Left lung (tissue), 14 donors: ENCODE measurements at regions of chr19 and their contacts with region 1.

Region 1: GRCh38 chr19:18058208-18059030 is 28.3 kb downstream of the IL12RB1 start:
- DNase-seq: peak; percentile 82 to 96 (median 86)
- ATAC-seq: peak; percentile 97
- H3K4me3 ChIP-seq: peak overlapping the region in 1 of 2 donors; percentile 34
- H3K27ac ChIP-seq: peak overlapping the region; percentile 75 to 79
- H3K4me1 ChIP-seq: peaks cover 11 to 20% of the 10 kb centered on the region in 2 donors
- H3K27me3 ChIP-seq: no peaks in the 10 kb centered on the region
- CTCF ChIP-seq: peak; percentile 89 to 94

Region 2: DNA sequence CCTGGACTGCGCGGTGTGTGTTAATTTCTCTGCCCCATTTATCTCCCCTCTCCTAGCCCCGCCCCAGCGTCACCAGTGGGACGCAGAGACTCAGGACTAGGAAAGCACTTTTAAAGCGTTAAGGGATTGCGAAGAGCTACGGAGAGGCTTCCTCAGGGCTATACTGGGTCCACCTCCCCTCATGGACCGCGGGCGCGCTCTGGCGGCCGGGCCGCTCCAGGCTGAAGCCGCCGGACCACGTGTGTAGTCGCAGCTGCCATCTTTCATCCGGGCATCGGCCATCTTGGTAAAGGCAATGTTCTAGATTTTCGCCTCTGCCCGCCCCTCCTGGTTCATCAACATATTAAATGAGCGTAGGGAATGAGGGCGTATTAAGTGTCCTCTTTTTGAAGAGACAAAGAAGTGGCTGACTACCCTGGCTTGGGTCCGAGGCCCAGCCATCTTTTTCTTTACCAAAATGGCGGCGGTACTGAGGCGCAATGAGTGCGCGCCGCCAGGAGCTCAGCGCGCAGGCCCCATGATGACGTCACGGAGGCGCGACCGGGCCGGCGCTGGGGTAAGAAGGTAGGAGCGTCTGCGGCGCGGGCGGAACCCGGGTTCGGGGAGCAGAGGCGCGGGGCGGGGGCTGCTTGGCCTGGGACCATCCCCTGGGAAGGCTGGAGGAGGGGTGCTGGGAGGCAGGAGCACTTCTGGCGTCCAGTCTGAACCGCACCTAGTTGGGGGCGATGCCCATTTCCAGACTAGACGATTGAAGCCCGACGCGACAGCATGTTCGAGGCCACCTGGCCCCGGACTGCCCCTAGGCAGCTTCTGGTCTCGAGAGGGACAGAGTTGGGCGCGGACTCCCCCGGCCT is 125.7 kb before region 1 on chr19 and contains the start of gene CCDC124:
- intact Hi-C with region 1: no loop called
- DNase-seq: peak; percentile 92 to 97 (median 94)
- ATAC-seq: peak; percentile 98
- H3K4me3 ChIP-seq: peak within 1 kb of the TSS; percentile 68 to 87
- H3K27ac ChIP-seq: peak within 1 kb of the TSS; percentile 76 to 89
- H3K4me1 ChIP-seq: peaks cover 12 to 24% of the 10 kb centered on the region in 2 donors
- H3K27me3 ChIP-seq: no peaks in the 10 kb centered on the region
- CTCF ChIP-seq: peak; percentile 70 to 74
- polyA plus RNA-seq, gene CCDC124: 42.0 to 63.8 (median 53.1) TPM

Region 3: GRCh38 chr19:17947815-17948513 is 110.5 kb before region 1 on chr19:
- intact Hi-C with region 1: loop called in 1 of 2 experiments (anchors 10 kb)
- DNase-seq: peak; percentile 93 to 98 (median 96)
- ATAC-seq: peak; percentile 89
- H3K4me3 ChIP-seq: peak overlapping the region; percentile 57 to 68
- H3K27ac ChIP-seq: peak overlapping the region; percentile 33 to 68
- H3K4me1 ChIP-seq: peaks cover 9 to 58% of the 10 kb centered on the region in 2 donors
- H3K27me3 ChIP-seq: peaks cover 39 to 49% of the 10 kb centered on the region in 2 donors
- CTCF ChIP-seq: no peak

Region 4: DNA sequence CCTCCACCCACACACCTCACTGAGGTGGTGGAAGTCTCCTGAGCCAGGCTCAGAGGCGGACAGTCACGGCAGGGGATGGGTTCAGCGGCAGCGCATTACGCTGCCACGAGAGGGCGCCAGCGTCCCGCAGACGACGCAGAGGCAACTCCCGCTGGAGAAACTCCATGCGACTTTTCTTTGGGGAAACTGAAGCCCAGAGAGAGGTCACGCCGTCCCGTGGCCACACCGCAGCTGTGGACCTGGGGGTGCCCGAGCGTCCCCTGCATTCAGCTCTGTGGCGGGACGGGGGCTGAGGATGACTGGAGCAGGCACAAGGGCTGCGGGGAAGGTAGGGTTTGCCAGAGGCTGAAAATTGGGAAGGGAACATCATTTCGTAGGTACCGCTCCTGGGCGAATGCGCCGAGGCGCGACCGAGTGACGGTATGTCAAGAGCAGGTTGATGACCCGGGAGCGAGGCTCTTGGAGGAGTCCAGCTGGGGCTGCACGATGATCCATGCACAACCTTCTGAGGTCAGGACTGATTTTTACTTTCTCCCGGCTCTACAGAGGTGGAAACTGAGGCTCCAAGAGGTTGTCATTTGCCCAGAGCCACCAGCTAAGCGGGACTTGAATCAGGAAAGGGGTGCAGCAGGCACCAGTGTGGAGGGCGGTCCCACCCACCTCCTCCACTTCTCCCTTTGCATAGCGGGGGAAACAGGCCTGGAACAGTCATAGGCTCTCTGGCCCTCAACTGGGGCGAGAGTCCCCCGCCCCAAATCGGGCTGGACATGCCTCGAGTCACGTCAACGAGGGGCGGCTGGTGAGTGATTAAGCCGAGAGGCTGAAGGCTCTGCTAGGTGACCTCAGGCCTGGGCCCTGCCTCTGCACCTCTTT is 51.1 kb before region 1 on chr19:
- intact Hi-C with region 1: loop called (anchors 2 to 5 kb)
- DNase-seq: peak; percentile 73 to 96 (median 87)
- ATAC-seq: peak; percentile 91
- H3K4me3 ChIP-seq: peak overlapping the region; percentile 31 to 53
- H3K27ac ChIP-seq: peak overlapping the region; percentile 74 to 75
- H3K4me1 ChIP-seq: peaks cover 14 to 57% of the 10 kb centered on the region in 2 donors
- H3K27me3 ChIP-seq: no peaks in the 10 kb centered on the region
- CTCF ChIP-seq: peak; percentile 98 to 100

Region 5: DNA sequence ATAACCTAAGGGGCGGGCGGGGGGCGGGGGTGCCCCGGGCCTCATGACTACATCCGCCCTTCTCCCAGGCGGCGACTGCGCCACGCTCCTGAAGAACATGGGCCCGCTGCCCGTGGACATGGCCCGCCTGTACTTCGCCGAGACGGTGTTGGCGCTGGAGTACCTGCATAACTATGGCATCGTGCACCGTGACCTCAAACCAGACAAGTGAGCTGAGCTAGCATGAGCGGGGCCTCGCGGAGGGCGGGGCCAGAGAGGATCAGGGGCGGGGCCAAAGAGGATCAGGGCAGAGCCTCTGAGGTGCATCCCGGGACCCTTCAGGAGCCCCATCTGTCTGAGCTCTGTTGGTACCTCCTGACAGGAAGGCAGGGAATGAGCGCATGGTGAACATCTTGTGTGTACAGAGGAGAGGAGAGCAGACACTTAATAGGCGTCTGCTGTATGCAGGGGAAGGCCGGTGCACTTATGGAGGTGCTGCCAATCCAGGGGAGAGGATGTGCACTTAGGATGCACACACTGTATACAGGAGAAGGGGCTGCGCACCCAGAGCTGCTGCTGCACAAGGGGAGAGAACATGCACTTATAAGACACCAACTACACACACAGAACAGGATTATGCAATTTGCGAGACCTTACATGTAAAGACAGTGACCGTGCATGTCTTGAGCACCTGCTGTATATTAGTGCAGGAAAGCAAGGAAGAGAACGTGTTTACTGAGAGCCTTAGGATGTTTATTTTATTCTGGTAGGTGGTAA is 73.6 kb after region 1 on chr19:
- intact Hi-C with region 1: no loop called
- DNase-seq: no peak
- ATAC-seq: no peak
- H3K4me3 ChIP-seq: no peak overlapping the region
- H3K27ac ChIP-seq: no peak overlapping the region
- H3K4me1 ChIP-seq: peaks cover 0 to 8% of the 10 kb centered on the region in 2 donors
- H3K27me3 ChIP-seq: no peaks in the 10 kb centered on the region
- CTCF ChIP-seq: no peak